PC-3 (cell line): ENCODE measurements at regions of chr14 and their contacts with region 1.

Region 1: DNA sequence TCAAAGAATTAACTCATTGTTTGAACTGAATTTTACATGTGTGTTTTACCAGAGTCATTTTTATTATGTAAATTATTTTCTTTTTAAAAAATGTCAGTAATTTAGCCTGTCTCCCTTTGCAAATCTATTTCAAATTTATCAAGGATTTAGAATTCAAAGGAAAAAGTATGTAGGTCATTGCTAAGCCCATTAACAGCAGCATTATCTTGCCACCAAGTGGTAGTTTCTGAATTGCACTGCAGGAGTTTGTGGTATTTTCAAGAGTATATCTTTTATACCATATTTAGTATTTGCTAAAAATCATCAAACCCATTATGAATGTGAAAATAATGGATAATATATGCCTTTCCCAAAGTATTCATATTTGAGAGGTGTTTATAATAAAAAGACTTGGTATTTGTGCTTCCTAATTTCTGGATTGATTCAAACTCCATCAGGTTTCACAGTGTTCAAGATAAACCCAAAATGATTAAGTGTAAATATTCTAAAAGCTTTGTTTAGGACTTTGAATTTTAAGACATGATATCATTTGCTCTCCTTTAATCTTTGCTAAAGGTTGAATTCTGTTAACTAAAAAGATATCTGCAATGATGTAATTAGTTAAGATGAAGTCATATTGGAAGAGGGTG is 711.4 kb downstream of the FSCB start:
- DNase-seq: peak; percentile 51
- ATAC-seq: peak; percentile 73
- H3K4me3 ChIP-seq: no peak overlapping the region
- H3K27ac ChIP-seq: no peak overlapping the region
- H3K4me1 ChIP-seq: no peaks in the 10 kb centered on the region
- H3K27me3 ChIP-seq: no peaks in the 10 kb centered on the region
- CTCF ChIP-seq: peak; percentile 63

Region 2: GRCh38 chr14:42110166-42110723 is 1685.5 kb before region 1 on chr14:
- CTCF ChIA-PET with region 1: no interaction called
- POLR2A ChIA-PET with region 1: no interaction called
- intact Hi-C with region 1: loop called (anchors 10 kb)
- DNase-seq: peak; percentile 85
- ATAC-seq: peak; percentile 78
- H3K4me3 ChIP-seq: no peak overlapping the region
- H3K27ac ChIP-seq: no peak overlapping the region
- H3K4me1 ChIP-seq: peaks cover 17% of the 10 kb centered on the region
- H3K27me3 ChIP-seq: no peaks in the 10 kb centered on the region
- CTCF ChIP-seq: peak; percentile 95

Region 3: DNA sequence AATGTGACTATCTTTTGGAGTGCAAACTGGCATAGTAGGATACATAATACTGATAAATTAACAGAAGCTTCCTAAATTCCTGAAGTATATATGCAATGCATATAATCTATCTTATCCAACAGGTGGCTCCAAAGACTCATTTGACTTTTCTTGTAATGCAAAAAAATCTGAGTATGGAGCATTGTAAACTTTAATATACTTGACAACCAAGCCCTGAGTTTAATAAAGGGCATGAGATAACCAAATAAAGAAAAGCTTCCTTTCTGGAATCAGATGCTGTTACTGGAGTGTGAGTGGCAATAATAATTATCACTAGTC is 292.2 kb before region 1 on chr14:
- CTCF ChIA-PET with region 1: no interaction called
- POLR2A ChIA-PET with region 1: no interaction called
- intact Hi-C with region 1: loop called (anchors 1 kb)
- DNase-seq: peak; percentile 45
- ATAC-seq: peak; percentile 92
- H3K4me3 ChIP-seq: no peak overlapping the region
- H3K27ac ChIP-seq: no peak overlapping the region
- H3K4me1 ChIP-seq: no peaks in the 10 kb centered on the region
- H3K27me3 ChIP-seq: no peaks in the 10 kb centered on the region
- CTCF ChIP-seq: peak; percentile 61

Region 4: DNA sequence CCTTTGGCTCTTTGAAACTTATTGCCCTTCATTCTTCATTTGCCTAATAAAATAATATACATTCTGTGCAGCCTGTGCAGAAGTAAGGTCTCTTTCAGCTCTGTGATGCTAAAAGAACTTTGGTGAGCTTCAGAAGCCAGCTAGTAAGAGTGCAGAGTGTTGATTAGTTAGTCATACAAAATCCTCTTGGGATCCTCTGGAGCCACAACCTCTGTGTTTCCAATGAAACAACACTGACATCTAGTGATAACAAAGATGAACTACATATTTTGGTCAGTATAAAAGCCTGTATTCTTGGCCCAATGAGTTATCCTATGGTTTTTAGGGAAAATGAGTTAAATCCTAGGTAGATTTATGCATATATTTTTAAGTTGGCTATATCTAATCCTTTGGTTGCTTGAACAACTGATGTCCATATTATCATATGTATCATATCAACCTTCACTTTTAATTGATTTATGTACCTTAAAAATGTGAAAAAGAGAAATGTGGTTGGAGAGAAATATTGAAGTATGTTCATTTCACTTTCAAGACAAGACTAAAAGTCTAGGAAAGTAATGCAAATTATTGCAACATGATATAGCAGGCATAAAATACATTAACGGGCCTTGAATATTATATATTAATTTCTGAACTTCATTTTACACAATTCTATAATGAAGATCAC is 1007.7 kb after region 1 on chr14:
- CTCF ChIA-PET with region 1: no interaction called
- POLR2A ChIA-PET with region 1: no interaction called
- intact Hi-C with region 1: loop called (anchors 2 kb)
- DNase-seq: peak; percentile 77
- ATAC-seq: peak; percentile 95
- H3K4me3 ChIP-seq: no peak overlapping the region
- H3K27ac ChIP-seq: no peak overlapping the region
- H3K4me1 ChIP-seq: no peaks in the 10 kb centered on the region
- H3K27me3 ChIP-seq: no peaks in the 10 kb centered on the region
- CTCF ChIP-seq: peak; percentile 90

Region 5: GRCh38 chr14:44846232-44846824 is 1050.6 kb after region 1 on chr14:
- CTCF ChIA-PET with region 1: no interaction called
- POLR2A ChIA-PET with region 1: no interaction called
- intact Hi-C with region 1: loop called (anchors 2 kb)
- DNase-seq: peak; percentile 75
- ATAC-seq: peak; percentile 68
- H3K4me3 ChIP-seq: peak overlapping the region; percentile 6; the same call in 1 of the 2 replicates
- H3K27ac ChIP-seq: no peak overlapping the region
- H3K4me1 ChIP-seq: no peaks in the 10 kb centered on the region
- H3K27me3 ChIP-seq: 0 out of 2 replicates have a peak, but pooled peaks cover 4% of the 10 kb centered on the region
- CTCF ChIP-seq: peak; percentile 96